Activated CD4-positive, alpha-beta T cell treated with anti-CD3 and anti-CD28 coated beads, Interleukin-2, amount 10 ng/mL, durations not matched to agents 24 days and 14 days (primary cell): ENCODE measurements at regions of chr6 and their contacts with region 1.

Region 1: DNA sequence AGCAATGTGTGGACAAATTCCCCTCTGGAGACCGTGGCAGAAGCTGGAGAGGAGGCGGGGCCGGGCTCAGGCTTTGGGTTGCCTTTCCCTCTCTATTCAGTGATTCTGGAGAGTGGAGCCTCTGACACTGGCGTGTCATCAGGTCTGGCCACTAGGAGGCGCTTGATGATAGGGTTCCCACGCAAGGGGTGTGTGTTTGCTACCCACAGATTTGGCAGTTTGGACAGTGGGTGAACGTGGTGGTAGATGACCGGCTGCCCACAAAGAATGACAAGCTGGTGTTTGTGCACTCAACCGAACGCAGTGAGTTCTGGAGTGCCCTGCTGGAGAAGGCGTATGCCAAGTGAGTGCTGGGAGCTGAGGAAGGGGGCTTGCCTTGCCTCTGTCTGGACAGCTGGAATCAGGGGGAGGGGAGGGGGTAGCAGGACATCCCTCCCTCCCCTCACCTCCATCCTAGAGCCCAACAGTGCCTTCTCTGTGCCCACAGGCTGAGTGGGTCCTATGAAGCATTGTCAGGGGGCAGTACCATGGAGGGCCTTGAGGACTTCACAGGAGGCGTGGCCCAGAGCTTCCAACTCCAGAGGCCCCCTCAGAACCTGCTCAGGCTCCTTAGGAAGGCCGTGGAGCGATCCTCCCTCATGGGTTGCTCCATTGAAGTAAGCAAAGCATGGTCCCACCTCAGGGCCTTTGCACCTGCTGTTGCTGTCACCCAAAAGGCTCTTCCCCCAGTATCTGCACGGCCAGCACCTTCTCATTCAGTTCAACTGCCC is 14.3 kb downstream of the CAPN11 start:
- DNase-seq: peak; percentile 93
- H3K4me3 Mint-ChIP-seq: no peak overlapping the region
- H3K27ac Mint-ChIP-seq: peak overlapping the region; percentile 29
- H3K4me1 Mint-ChIP-seq: peaks cover 16% of the 10 kb centered on the region
- H3K27me3 Mint-ChIP-seq: peaks cover 14% of the 10 kb centered on the region

Region 2: GRCh38 chr6:43851204-43851865 is 321.6 kb before region 1 on chr6:
- intact Hi-C with region 1: no loop called
- DNase-seq: no peak
- H3K4me3 Mint-ChIP-seq: no peak overlapping the region
- H3K27ac Mint-ChIP-seq: no peak overlapping the region
- H3K4me1 Mint-ChIP-seq: no peaks in the 10 kb centered on the region
- H3K27me3 Mint-ChIP-seq: peaks cover 5% of the 10 kb centered on the region

Region 3: DNA sequence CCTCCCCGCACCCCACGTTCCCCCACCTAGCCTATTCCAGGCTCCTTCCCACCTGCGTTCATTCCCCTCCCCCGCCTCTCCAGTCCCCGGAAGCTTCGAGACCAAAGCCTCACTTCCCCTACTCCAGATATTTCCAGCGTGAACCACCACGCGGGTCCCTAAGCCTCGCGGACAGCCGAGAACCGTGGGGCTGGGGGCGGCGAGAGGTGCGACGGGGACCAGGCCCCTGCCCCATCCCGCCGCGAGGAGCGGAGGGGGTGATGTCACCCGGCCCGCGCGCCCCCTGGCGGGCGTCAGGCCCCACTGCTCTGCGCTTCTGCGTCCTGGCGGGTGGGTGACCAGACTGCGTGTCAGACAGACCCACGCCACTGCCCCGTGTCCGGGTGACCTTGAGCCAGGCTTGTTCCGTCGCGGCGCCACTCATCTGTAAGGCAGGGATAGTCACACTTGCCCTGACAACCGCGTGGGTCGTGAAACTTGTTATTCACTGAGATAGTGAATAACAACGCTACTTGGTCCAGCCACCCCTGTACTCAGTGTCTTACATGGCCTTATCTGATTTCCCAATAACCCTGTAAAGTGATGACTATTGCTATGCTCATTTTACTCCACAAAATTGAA is 65.0 kb after region 1 on chr6:
- intact Hi-C with region 1: loop called (anchors 1 kb)
- DNase-seq: peak; percentile 96
- H3K4me3 Mint-ChIP-seq: peak overlapping the region; percentile 89
- H3K27ac Mint-ChIP-seq: peak overlapping the region; percentile 98
- H3K4me1 Mint-ChIP-seq: peaks cover 33% of the 10 kb centered on the region
- H3K27me3 Mint-ChIP-seq: peaks cover 2% of the 10 kb centered on the region

Region 4: DNA sequence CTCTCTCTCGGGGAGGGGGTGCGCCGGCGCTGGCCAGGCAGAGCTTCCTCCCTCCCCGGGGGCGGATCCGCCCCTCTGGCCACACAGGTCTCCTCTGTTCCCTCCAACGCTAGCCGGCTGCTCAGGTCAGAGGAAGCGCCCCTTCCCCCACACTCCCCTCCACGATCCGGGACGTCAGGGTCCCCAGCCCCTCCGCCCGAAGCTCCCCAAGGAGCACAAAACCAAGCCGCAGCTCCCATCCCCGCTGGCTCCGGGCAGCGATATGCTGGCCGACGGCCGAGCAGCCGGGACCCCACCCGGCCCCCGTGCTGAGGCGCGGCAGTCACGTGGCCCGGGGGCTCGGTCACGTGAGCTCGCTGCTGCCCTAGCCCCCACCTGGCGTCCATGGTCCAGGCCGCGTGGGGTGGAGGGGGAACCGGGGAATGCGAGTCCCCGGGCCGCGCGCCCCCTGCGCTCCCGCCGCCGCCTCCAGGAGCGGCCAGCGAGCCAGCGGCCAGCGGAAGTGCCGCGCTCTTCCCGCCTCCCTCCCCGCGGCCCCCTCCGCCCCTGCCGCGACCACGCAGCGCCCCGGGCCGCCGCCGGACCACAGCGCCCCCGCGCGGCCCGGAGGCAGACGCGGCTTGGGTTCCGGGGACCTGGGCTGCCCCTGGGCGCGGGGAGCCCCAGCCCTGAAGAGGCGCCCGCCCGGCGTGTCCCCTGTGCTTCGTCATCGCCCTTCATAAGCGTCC is 84.3 kb after region 1 on chr6 and contains the start of gene SLC35B2:
- intact Hi-C with region 1: loop called (anchors 1 kb)
- DNase-seq: peak; percentile 93
- H3K4me3 Mint-ChIP-seq: peak within 1 kb of the TSS; percentile 94
- H3K27ac Mint-ChIP-seq: peak within 1 kb of the TSS; percentile 94
- H3K4me1 Mint-ChIP-seq: peaks cover 57% of the 10 kb centered on the region
- H3K27me3 Mint-ChIP-seq: no peaks in the 10 kb centered on the region
- total RNA-seq, gene SLC35B2: 25.3 and 28.0 TPM in 2 replicates

Region 5: DNA sequence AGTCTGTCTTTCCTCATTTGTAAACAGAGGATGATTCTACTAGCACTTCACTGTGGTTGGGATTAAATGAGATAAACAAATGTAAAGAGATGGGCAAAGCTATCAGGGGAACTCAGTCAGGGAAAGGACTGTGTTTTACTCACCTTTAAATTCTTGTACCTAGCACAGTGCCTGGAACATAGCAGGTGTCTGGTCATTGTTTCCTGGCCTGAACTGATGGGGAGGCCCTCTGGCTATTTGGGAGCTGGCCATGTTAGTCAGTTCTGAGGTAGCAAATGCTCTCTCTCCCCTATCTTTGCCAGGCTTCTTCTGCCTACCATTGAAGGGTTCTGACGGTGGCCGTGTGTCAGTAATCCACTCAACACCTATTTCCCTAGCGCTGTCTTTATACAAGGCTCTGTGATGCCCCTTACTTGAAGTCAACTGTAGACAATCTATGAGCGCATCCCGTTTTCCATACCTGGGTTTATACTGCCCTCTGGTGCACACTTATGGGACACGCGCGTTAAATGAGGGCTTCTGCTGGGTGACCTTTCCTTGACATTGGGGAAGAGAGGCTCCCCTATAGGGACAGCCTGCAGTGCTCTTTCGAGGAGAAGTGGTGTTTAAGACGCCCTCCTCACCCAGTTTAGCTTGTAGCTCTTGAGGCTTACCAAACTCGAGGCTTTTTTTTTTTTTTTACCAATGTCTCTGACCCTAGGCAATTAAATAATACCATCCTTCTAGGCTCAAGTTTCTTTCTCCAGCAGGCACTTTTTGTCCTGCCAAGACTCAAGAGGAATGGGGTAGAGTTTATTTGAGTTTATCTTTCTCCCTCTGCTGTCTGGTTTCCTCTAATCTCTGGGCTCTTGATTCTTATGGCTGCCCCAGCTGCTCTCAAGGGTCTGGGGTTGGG is 165.6 kb after region 1 on chr6:
- intact Hi-C with region 1: loop called (anchors 1 kb)
- DNase-seq: peak; percentile 91
- H3K4me3 Mint-ChIP-seq: no peak overlapping the region
- H3K27ac Mint-ChIP-seq: no peak overlapping the region
- H3K4me1 Mint-ChIP-seq: no peaks in the 10 kb centered on the region
- H3K27me3 Mint-ChIP-seq: peaks cover 30% of the 10 kb centered on the region